Posterior vena cava (tissue), 2 donors: ENCODE measurements at regions of chr19 and their contacts with region 1.

Region 1: DNA sequence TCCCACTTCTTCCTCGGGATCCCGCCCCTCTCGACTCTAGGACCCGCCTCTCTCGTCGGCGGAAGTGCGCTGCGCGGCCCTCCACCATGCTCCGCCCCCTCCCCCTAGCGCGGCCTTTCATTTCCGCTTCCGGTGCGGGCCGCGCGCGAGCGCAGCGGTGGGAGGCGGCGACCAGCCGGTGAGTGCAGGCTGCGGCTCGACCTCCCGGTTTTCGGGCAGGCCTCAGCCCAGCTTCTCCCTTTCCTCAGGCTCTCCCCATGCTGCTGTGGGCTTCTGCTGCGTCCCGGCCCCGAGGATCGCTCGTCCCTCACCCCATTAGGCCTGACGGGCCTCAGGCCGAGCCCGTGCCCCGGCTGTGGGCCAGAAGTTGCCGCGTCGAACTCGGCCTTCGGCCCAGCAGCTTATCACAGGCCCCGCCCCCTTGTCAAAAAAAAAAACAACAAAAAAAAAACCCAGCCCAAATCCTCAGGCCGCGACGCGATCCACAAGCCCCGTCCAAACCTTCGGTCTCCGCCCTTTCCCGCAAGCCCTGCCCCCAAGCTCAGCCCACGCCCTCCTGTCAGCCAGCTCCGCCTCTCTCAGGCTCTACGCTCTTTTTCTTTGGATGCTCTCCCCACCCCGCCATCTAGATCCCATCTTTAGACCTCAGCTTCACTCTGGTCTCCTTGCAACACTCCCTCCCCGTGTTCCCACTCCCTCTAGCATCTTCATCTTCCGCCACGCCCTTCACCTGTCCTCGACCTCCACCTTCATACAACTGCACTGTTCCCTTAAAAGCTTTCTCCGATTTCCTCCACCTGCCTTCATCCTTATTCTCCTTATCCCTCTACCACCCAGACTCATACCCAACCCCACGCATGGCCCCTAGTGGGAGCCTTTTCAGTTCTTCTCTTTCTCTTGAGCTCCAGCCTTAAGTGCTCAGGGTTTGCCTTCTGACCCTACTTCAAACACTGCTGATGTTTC is at the start of gene CLASRP:
- DNase-seq: peak; percentile 98
- total RNA-seq, gene CLASRP: 48.6 to 58.5 TPM

Region 2: DNA sequence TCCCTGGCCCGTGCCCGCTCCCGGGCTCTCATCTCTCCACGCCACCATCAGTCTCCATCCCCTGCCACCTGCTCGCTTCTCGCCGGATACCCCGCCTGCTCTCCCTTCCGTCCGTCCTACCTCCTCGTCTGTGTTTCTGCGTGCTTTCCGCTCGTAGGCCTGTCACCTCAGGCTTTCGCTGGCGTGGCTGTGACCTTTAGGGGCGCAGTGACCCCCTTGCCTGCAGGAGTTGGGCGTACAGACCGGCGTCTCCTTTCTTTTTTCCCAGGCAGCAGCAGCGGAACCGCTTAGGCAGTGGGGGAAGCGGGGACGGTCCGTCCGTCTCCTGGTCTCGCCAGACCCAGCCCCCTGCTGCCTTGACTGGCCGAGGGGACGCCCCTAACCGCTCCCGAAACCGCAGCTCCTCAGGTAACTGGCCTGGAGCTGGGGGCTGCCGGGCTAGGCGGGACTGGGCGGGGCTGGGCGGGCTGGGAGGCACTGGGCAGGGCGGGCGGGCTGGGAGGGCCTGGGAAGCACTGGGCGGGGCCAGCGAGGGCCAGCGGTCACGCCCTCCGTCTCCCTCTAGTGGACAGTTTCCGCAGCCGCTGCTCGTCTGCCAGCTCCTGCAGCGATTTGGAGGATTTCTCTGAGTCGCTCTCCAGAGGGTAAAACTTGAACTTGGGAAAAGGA is 977.3 kb after region 1 on chr19:
- intact Hi-C with region 1: loop called in 1 of 2 experiments (anchors 10 kb)
- DNase-seq: peak; percentile 95